AG04450 (cell line): ENCODE measurements at regions of chr13 and their contacts with region 1.

Region 1: GRCh38 chr13:75870397-75870903 is 234.3 kb downstream of the LMO7 start:
- DNase-seq: no peak
- H3K4me3 ChIP-seq: peak overlapping the region; percentile 47
- H3K27ac ChIP-seq: no peak overlapping the region
- H3K27me3 ChIP-seq: no peaks in the 10 kb centered on the region
- CTCF ChIP-seq: peak; percentile 79

Region 2: GRCh38 chr13:75675421-75675820 is 195.0 kb before region 1 on chr13:
- CTCF ChIA-PET with region 1: interaction called, 20 read pairs
- POLR2A ChIA-PET with region 1: no interaction called
- DNase-seq: no peak
- H3K4me3 ChIP-seq: no peak overlapping the region
- H3K27ac ChIP-seq: no peak overlapping the region
- H3K27me3 ChIP-seq: no peaks in the 10 kb centered on the region
- CTCF ChIP-seq: no peak

Region 3: DNA sequence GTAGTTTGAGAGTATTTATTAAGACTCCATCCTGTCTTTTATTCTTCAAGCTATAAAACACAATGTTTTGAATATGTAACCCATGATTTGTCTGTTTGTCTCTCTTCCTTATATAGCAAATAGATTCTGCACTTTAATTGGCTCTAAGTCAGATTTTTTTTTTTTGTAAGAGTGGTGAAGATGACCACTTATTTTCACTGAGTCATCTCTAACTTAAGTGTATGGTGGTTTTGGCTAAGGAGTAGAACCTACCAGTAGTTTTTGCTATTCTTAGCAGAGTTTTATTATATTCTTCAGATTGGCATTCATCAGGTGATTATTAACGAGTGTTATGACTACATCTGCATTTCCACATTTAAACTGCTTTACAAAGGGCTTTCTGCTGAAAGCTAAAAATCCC is 39.6 kb before region 1 on chr13:
- CTCF ChIA-PET with region 1: no interaction called
- POLR2A ChIA-PET with region 1: no interaction called
- DNase-seq: no peak
- H3K4me3 ChIP-seq: no peak overlapping the region
- H3K27ac ChIP-seq: no peak overlapping the region
- H3K27me3 ChIP-seq: no peaks in the 10 kb centered on the region
- CTCF ChIP-seq: no peak

Region 4: DNA sequence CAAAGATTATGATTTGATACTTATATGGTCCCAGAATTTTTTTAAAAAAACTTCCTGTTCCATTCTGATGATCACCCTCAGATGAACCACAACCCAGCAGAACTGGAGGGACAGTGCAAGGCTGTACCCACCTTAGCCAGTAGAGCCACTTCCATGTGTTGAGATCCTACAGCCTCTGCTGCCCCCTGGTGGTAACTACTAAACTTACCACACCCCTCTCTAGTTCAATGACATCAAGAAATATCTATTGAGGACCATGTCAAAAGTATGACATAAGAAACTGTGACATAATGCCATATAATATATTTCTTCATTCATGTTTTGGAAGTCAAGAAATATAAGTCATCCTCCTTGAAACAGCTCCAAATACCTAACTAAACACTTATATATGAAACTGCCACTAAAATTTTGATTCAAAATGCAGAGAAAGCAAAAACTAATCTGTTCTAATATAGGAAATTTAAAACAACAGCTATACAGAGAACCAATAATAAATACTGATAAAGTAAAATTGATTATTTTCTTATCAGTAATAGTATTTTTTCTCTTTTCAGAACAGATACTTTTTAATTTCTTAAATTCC is 603.2 kb after region 1 on chr13:
- CTCF ChIA-PET with region 1: interaction called, 132 read pairs
- POLR2A ChIA-PET with region 1: no interaction called
- DNase-seq: peak; percentile 52
- H3K4me3 ChIP-seq: no peak overlapping the region
- H3K27ac ChIP-seq: no peak overlapping the region
- H3K27me3 ChIP-seq: peaks cover 2% of the 10 kb centered on the region
- CTCF ChIP-seq: peak; percentile 86

Region 5: DNA sequence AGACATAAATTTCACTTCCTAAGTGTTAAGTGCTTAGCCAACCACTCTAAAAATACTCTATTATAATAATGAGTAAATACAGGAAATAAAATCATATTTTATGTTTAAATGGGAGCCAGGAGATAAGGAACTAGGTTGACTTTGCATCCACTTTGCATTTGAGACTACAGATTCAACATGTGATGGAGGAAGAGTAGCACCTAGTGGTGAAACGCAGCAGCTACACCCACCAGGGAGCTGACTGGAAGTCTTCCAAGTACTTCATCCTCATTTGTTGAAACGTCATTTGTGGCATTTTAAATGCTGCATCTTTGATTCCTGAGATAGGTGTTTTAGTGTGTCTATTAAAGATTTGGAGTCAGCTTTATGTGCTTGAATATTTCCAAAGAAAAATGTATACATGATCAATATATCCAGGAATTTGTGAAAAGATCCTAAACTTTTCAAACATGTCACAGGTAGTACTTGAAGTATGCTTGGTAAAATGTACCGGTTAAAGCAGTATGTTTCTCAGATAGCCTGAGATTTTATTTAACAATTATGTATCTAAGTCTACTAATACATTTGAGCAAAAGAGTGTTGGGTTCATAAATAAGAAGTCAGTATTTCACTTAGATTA is 1033.2 kb after region 1 on chr13:
- CTCF ChIA-PET with region 1: interaction called, 15 read pairs
- POLR2A ChIA-PET with region 1: no interaction called
- DNase-seq: peak; percentile 50
- H3K4me3 ChIP-seq: no peak overlapping the region
- H3K27ac ChIP-seq: no peak overlapping the region
- H3K27me3 ChIP-seq: peaks cover 23% of the 10 kb centered on the region
- CTCF ChIP-seq: peak; percentile 100